ENCODE measurements at regions of chr14 and their contacts with region 1.

Region 1: DNA sequence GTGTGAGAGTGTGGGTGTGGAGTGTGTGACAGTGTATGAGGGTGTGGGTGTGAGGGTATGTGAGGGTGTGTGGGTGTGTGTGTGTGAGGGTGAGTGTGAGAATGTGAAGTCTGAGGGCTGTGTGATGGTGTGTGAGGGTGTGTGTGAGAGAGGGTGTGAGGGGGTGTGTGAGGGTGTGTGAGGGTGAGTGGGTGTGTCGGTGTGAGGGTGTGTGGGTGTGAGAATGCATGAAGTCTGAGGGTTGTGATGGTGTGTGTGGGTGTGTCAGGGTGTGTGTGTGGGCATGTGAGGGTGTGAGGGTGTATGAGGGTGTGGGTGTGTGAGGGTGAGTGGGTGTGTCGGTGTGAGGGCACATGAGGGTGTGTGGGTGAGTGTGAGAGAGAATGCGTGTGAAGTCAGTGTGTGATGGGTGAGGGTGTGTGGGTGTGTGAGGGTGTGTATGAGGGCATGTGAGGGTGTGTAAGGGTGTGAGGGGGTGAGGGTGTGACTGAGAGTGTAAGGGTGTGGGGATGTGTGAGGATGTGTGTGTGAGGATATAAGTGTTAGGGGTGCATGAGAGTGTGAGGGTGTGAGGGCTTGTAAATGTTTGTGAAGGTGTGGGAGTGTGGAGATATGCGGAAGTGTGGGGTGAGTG is 36.4 kb downstream of the TMEM121 start:
- DNase-seq: no peak
- H3K4me3 ChIP-seq: no peak overlapping the region
- H3K27ac ChIP-seq: no peak overlapping the region
- H3K4me1 ChIP-seq: peaks cover 0 to 4% (median 0%) of the 10 kb centered on the region in 3 donors
- H3K27me3 ChIP-seq: peaks cover 0 to 10% (median 0%) of the 10 kb centered on the region in 4 donors
- CTCF ChIP-seq: no peak
- POLR2A ChIP-seq: no peak

Region 2: GRCh38 chr14:105682940-105683570 is 120.2 kb after region 1 on chr14:
- intact Hi-C with region 1: loop called (anchors 10 kb)
- DNase-seq: no peak
- H3K4me3 ChIP-seq: no peak overlapping the region
- H3K27ac ChIP-seq: no peak overlapping the region
- H3K4me1 ChIP-seq: peaks cover 0 to 4% (median 0%) of the 10 kb centered on the region in 3 donors
- H3K27me3 ChIP-seq: no peaks in the 10 kb centered on the region
- CTCF ChIP-seq: no peak
- POLR2A ChIP-seq: no peak

Measured in esophagus squamous epithelium (tissue), 5 donors.